PC-9 (cell line): ENCODE measurements at regions of chr17 and their contacts with region 1.

Region 1: DNA sequence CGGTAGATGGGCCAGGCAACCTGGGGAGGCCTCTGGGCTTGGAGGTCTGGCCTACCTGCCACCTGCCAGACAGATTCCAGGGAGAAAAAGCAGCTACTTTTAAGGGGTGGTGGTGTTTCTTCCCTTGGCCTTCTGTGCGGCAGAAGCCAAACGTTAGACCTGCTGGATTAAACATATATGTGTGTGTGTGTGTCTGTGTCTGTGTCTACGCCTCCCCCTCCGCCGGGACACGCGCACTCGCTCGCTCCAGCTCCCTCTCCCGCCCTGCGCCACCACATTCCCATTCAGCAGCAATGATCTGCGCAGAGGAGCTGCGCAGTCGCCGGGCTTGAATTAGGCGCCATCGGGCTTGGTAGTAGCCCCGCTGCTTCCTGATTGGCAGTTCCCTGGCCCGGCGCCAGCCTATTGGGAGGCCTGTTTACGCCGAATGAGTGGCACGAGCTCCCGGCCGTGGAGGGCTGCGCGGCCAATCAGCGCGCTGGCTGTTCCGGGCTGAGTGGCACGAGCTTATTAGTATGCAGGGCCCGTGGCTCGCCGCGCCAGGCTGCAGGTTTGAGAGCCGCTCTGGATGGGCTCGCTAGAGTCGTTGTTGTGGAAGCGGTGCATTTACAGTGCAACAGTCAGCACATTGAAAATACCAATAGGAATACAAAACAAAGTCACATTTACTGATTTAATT is at the start of gene BAHCC1:
- DNase-seq: peak; percentile 96 to 100
- H3K4me3 ChIP-seq: peak within 1 kb of the TSS; percentile 78
- H3K27ac ChIP-seq: peak within 1 kb of the TSS; percentile 73
- H3K4me1 ChIP-seq: peaks cover 15% of the 10 kb centered on the region
- H3K27me3 ChIP-seq: no peaks in the 10 kb centered on the region
- CTCF ChIP-seq: no peak
- total RNA-seq, gene BAHCC1: 33.7 and 35.4 TPM in 2 replicates

Region 2: DNA sequence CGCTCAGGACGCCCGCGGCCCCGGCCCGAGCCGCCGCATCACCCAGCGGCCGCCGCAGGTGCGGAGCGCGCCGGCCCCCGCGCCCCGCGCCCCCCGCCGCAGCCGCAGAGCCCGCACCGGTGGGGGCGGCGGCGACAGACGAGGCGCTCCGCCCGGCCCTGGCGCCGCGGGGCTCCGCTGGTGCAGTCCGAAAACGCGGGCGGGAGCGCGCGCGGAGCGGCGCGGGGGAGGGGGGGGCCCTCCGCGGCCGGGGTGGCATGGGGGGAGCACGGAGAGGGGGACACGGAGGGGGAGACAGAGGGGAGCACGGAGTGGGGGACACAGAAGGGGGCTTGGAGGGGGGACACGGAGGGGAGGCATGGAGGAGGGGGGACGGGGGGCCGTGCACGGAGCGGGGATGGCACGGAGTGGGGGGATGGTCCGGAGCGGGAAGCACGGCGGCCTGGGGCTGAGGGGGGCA is 229.0 kb before region 1 on chr17 and contains the start of gene AATK:
- CTCF ChIA-PET with region 1: no interaction called
- POLR2A ChIA-PET with region 1: no interaction called
- intact Hi-C with region 1: no loop called
- DNase-seq: no peak
- H3K4me3 ChIP-seq: no peak within 1 kb of the TSS
- H3K27ac ChIP-seq: no peak within 1 kb of the TSS
- H3K4me1 ChIP-seq: no peaks in the 10 kb centered on the region
- H3K27me3 ChIP-seq: peaks cover 21% of the 10 kb centered on the region
- CTCF ChIP-seq: no peak
- total RNA-seq, gene AATK: 0.46 and 2.4 TPM in 2 replicates

Region 3: GRCh38 chr17:81238817-81239600 is 156.1 kb before region 1 on chr17 and contains the starts of genes NDUFAF8 and TEPSIN:
- CTCF ChIA-PET with region 1: no interaction called
- POLR2A ChIA-PET with region 1: interaction called, 10 read pairs
- intact Hi-C with region 1: no loop called
- DNase-seq: peak; percentile 97 to 99
- H3K4me3 ChIP-seq: peak within 1 kb of the TSS; percentile 75
- H3K27ac ChIP-seq: no peak within 1 kb of the TSS
- H3K4me1 ChIP-seq: peaks cover 6% of the 10 kb centered on the region; the same call in 1 of the 2 replicates
- H3K27me3 ChIP-seq: no peaks in the 10 kb centered on the region
- CTCF ChIP-seq: no peak
- total RNA-seq, gene NDUFAF8: 53.3 and 64.2 TPM in 2 replicates
- total RNA-seq, gene TEPSIN: 35.0 and 36.8 TPM in 2 replicates

Region 4: DNA sequence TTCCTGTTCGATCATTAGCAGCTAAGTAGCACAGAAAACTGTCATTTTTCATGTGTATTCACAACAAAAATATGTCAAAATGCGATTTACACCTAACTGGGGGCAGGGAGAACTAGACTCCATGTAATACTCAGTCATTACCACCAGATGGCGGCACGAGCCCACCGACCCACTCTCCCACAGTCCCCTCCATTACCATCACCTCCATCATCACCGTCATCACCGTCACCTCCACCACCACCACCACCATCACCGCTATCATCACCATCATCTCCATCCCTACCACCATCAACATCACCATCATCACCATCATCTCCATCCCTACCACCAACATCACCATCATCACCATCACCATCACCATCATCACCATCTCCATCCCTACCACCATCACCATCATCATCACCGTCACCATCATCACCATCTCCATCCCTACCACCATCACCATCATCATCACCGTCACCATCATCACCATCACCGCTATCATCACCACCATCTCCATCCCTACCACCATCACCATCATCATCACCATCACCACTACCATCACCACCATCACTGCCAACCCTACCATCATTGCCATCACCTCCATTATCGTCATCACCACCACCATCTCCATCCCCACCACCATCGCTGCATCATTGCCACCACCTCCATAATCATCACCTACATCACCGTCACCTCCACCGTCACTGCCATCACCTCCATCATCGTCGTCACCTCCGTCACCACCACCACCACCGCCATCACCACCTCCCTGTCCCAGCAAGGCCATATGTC is 141.5 kb before region 1 on chr17:
- CTCF ChIA-PET with region 1: no interaction called
- POLR2A ChIA-PET with region 1: interaction called, 4 read pairs
- intact Hi-C with region 1: loop called (anchors 5 kb)
- DNase-seq: peak in 1 of 2 experiments; percentile 51
- H3K4me3 ChIP-seq: no peak overlapping the region
- H3K27ac ChIP-seq: no peak overlapping the region
- H3K4me1 ChIP-seq: no peaks in the 10 kb centered on the region
- H3K27me3 ChIP-seq: no peaks in the 10 kb centered on the region
- CTCF ChIP-seq: peak; percentile 79

Region 5: GRCh38 chr17:81328978-81329919 is 65.8 kb before region 1 on chr17:
- CTCF ChIA-PET with region 1: no interaction called
- POLR2A ChIA-PET with region 1: interaction called, 10 read pairs
- intact Hi-C with region 1: loop called (anchors 1 kb)
- DNase-seq: peak; percentile 91 to 100
- H3K4me3 ChIP-seq: peak overlapping the region; percentile 57
- H3K27ac ChIP-seq: peak overlapping the region; percentile 90
- H3K4me1 ChIP-seq: peaks cover 54% of the 10 kb centered on the region
- H3K27me3 ChIP-seq: no peaks in the 10 kb centered on the region
- CTCF ChIP-seq: no peak

Region 6: DNA sequence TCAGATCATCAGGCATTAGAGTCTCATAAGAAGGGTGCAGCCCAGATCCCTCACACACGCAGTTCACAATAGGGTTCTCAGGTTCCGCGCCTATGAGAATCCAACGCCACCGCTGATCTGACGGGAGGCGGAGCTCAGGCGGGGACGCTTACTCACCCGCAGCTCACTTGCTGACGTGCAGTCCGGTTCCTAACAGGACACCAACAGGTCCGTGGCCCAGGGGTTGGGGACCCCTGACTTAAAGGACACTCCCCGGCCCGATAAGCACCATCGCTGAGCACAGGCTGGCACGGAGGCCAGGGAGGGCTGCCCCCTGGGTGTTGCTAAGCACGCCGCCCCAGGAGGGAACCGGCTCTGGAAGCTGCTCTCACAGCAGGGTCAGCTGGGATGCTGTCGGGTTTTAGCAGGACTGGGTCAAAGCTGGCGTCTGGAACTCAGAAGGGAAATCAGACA is 29.9 kb before region 1 on chr17:
- CTCF ChIA-PET with region 1: no interaction called
- POLR2A ChIA-PET with region 1: interaction called, 6 read pairs
- intact Hi-C with region 1: loop called (anchors 1 kb)
- DNase-seq: peak; percentile 77 to 85
- H3K4me3 ChIP-seq: peak overlapping the region; percentile 60
- H3K27ac ChIP-seq: peak overlapping the region; percentile 76
- H3K4me1 ChIP-seq: peaks cover 24% of the 10 kb centered on the region
- H3K27me3 ChIP-seq: no peaks in the 10 kb centered on the region
- CTCF ChIP-seq: no peak

Region 7: GRCh38 chr17:81419328-81419885 is 24.3 kb after region 1 on chr17:
- CTCF ChIA-PET with region 1: no interaction called
- POLR2A ChIA-PET with region 1: no interaction called
- intact Hi-C with region 1: loop called (anchors 1 kb)
- DNase-seq: peak; percentile 48 to 94
- H3K4me3 ChIP-seq: peak overlapping the region; percentile 40; the same call in 1 of the 2 replicates
- H3K27ac ChIP-seq: peak overlapping the region; percentile 63
- H3K4me1 ChIP-seq: peaks cover 36% of the 10 kb centered on the region
- H3K27me3 ChIP-seq: no peaks in the 10 kb centered on the region
- CTCF ChIP-seq: no peak

Region 8: GRCh38 chr17:81566461-81567126 is 171.5 kb after region 1 on chr17:
- CTCF ChIA-PET with region 1: no interaction called
- POLR2A ChIA-PET with region 1: interaction called, 3 read pairs
- intact Hi-C with region 1: loop called (anchors 10 kb)
- DNase-seq: peak; percentile 74 to 81
- H3K4me3 ChIP-seq: peak overlapping the region; percentile 34; the same call in 1 of the 2 replicates
- H3K27ac ChIP-seq: peak overlapping the region; percentile 63
- H3K4me1 ChIP-seq: peaks cover 47% of the 10 kb centered on the region
- H3K27me3 ChIP-seq: no peaks in the 10 kb centered on the region
- CTCF ChIP-seq: no peak